ENCODE measurements at regions of chr3 and their contacts with region 1.

Region 1: DNA sequence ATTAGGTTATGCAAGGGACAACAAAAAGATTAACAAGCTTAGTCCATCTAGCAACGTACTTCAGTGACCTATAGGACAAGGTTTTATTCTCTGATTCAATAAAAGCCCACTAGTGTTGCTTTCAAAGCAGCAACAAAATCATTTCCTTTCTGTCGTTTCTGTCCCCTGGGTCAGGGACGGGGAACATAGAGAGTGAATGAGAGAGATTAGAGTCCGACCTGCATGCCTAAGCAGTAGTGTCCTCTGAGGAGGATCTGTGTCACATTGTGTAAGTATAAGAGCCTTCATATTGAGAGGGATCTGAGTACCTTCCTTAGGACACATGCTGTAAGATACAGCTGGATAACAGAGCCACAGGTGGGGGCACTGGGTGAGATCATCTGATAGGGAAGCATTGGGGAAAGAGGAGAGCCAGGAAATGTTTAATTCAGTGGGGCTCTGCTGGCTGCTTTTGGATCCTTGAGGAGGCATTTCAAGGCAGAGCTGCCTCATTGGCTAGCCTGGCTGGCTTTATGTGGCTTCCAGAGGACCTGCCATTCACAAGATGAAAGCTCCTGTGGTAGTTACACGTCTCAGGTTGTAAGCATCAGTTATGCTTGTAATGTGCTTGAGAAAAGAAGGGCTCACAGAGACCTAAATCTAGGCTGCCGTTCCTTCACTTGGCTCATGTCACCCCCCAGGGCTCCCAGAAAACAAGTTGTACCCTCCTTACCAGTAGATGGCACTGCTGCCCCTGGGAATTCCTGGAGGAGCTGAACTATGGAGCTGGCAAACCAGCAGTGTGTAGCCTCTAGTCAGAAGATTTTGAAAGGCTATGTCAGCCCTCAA is 2.7 kb downstream of the TMEM108 start:
- DNase-seq: peak; percentile 70
- H3K4me3 ChIP-seq: no peak overlapping the region
- H3K27ac ChIP-seq: no peak overlapping the region
- H3K4me1 ChIP-seq: no peaks in the 10 kb centered on the region
- H3K27me3 ChIP-seq: peaks cover 17% of the 10 kb centered on the region
- CTCF ChIP-seq: peak; percentile 34

Region 2: DNA sequence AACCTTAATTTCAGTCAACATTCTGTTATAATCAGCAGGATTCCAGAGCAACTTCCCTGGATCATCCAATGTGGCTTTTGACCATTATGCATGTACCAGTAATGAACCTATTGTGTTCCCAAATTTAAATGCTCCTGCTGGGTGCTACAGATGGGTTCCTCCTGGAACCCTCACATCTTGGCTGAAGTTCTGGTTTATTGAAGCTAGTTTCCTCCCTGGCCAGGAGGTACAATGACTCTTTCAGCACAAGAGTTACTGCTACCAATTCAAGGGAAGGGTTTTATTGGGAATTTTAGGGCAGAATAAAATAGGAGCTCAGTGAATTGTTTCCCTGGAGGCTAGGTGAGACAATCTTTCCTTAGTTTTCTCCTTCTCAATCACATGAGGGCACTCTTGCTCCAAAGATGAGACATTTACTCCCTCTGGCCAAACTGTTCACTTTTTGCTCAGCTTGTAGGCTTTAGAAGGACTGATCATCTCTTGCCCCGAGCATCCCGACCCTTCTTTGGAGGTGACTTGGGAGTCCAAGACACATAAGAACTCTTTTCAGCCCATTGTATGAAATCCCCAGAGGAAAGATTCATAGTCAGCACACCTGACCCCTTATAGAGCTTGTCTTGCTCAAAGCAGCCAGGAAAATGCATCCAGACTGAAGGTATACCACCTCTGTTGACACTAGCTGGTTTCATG is 309.9 kb before region 1 on chr3:
- intact Hi-C with region 1: loop called (anchors 10 kb)
- DNase-seq: no peak
- H3K4me3 ChIP-seq: no peak overlapping the region
- H3K27ac ChIP-seq: no peak overlapping the region
- H3K4me1 ChIP-seq: no peaks in the 10 kb centered on the region
- H3K27me3 ChIP-seq: no peaks in the 10 kb centered on the region
- CTCF ChIP-seq: no peak

Region 3: DNA sequence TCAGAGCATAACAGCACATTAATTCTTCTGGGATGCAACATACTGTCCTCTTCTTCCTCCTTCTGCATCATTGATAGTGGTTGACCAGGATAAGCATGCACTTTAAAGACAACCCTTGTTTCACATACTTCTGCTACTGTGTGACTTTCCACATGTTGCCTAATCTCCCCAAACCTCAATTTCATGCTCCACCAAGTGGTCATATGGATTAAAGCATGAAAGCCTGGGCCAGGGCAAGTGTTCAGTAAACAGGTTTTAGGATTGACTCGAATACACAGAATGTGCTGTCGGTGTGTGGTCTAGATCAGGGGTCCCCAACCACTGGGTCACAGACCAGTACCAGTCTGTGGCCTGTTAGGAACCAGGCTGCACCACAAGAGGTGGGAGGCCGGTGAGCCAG is 336.5 kb after region 1 on chr3:
- intact Hi-C with region 1: loop called (anchors 5 kb)
- DNase-seq: no peak
- H3K4me3 ChIP-seq: no peak overlapping the region
- H3K27ac ChIP-seq: no peak overlapping the region
- H3K4me1 ChIP-seq: no peaks in the 10 kb centered on the region
- H3K27me3 ChIP-seq: no peaks in the 10 kb centered on the region
- CTCF ChIP-seq: no peak

Region 4: DNA sequence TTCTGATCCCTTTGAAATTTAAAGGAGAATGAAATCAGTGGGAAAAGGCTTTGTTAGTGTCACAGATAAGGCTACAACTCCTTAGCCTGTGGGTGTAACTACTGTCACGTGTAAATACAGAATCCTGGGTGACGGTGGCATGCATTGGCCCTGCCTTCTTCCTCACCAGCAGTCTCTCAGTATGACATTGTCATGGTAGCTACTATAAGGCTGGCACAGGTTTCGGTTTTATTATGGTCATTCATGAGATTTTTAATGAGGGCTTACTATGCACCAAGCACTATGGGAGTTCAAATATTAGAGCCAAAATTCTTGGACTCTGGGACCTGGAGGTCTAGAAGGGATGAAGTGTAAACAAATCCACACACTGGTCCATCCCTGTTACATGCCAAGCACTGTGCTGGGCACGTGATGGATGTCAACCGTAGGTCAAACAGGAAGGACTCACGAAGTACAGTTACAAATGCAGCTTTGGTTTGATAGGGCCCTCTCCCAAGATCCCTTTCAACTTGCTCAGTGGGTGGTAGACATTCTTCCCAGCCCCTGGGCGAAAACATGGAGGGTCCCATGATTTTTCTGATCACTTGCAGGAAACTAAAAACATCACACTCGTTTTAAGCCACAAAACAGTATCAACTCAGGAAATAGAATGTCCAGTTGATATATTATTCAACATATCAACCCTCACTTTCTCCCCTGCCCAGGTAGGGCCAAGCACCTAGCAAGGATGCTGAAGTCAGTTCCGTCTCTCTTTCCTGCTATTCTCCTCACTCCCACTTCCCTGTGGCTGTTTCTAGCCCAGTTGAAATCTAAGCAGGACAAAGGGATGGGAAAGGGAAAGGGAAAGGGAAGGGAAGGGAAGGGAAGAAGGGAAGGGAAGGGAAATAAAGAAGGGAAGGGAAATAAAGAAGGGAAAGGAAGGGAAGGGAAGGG is 384.3 kb after region 1 on chr3:
- intact Hi-C with region 1: loop called (anchors 5 kb)
- DNase-seq: no peak
- H3K4me3 ChIP-seq: no peak overlapping the region
- H3K27ac ChIP-seq: no peak overlapping the region
- H3K4me1 ChIP-seq: no peaks in the 10 kb centered on the region
- H3K27me3 ChIP-seq: no peaks in the 10 kb centered on the region
- CTCF ChIP-seq: no peak